HepG2 (cell line): ENCODE measurements at regions of chr17 and their contacts with region 1.

Region 1: DNA sequence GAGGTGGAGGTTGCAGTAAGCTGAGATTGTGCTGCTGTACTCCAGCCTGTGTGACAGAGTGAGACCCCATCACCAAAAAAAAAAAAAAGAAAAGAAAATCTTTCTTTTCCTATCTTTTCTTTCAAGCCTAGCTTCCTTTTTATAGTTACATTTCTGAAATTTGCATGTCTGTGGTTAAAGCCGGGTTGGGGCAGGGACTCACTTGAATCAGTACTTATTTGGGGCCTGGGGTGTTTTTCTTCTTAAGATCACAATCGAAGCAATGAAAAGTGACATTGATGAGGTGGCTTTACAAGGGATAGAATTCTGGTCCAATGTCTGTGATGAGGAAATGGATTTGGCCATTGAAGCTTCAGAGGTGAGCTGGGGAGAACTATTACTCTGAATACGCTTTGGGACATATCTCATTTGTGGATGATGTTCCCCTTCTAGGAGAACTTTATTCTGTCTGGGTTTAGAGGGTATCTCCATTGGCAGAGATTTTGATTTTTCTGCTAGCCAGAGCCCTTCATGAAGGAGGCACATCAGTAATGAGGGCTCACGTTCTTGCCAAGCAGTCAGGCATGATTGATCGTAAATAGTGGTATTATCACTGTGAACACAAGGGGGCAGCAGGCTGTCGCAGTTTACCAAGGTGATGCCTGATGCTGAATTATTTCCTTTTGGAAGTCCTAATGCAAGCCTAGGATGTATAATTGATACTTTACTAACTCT is 14.3 kb downstream of the KPNB1 start:
- DNase-seq: peak; percentile 63
- ATAC-seq: peak; percentile 86
- H3K4me3 ChIP-seq: no peak overlapping the region
- H3K27ac ChIP-seq: no peak overlapping the region
- H3K4me1 ChIP-seq: no peaks in the 10 kb centered on the region
- H3K27me3 ChIP-seq: no peaks in the 10 kb centered on the region
- CTCF ChIP-seq: peak; percentile 87
- EP300 ChIP-seq: no peak
- POLR2A ChIP-seq: no peak
- RAD21 ChIP-seq: no peak

Region 2: GRCh38 chr17:47713980-47714700 is 50.1 kb after region 1 on chr17:
- CTCF ChIA-PET with region 1: no interaction called
- POLR2A ChIA-PET with region 1: no interaction called
- in situ Hi-C with region 1: no loop called
- intact Hi-C with region 1: loop called (anchors 2 kb)
- DNase-seq: no peak
- ATAC-seq: peak; percentile 60
- H3K4me3 ChIP-seq: no peak overlapping the region
- H3K27ac ChIP-seq: no peak overlapping the region
- H3K4me1 ChIP-seq: peaks cover 16% of the 10 kb centered on the region
- H3K27me3 ChIP-seq: peaks cover 7 to 55% of the 10 kb centered on the region in 2 experiments; a peak in 4 of 5 replicates
- CTCF ChIP-seq: peak; percentile 53
- EP300 ChIP-seq: no peak
- POLR2A ChIP-seq: no peak
- RAD21 ChIP-seq: no peak

Region 3: DNA sequence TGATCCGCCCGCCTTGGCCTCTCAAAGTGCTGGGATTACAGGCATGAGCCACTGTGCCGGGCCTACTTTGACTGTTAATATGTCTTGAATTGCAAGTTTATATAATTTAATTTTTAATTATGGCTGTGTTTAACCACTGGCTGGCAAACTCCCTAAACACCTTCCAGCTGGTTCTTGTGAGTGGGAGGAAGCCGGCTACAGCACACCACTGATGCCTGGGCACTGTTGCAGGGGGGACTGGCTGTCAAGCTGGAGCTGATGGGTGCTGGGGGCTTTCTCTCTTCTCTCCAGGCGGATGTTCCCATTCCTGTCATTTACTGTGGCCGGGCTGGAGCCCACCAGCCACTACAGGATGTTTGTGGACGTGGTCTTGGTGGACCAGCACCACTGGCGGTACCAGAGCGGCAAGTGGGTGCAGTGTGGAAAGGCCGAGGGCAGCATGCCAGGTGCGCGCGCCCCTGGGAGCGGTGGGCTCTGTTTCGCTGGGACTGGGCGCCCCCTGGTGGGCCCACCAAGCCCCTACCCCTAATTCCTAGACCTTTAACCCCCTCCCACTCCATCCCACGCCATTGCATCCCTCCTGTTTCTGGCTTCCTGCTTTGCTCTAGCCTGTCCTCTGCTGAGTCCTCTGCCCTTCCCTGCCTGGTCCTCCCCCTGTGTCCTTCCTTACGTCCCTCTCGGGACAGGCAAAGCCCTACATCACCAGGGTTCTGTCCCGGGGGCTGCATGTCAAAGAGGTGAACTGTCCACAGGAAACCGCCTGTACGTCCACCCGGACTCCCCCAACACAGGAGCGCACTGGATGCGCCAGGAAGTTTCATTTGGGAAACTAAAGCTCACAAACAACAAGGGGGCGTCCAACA is 78.5 kb after region 1 on chr17:
- CTCF ChIA-PET with region 1: interaction called, 8 read pairs
- POLR2A ChIA-PET with region 1: no interaction called
- in situ Hi-C with region 1: no loop called
- intact Hi-C with region 1: loop called (anchors 1 kb)
- DNase-seq: peak; percentile 35
- ATAC-seq: peak; percentile 85
- H3K4me3 ChIP-seq: no peak overlapping the region; a peak in 1 of 6 replicates
- H3K27ac ChIP-seq: no peak overlapping the region
- H3K4me1 ChIP-seq: peaks cover 12% of the 10 kb centered on the region; the same call in 1 of the 2 replicates
- H3K27me3 ChIP-seq: peaks cover 2 to 74% of the 10 kb centered on the region in 2 experiments; a peak in 4 of 5 replicates
- CTCF ChIP-seq: peak; percentile 90
- EP300 ChIP-seq: no peak
- POLR2A ChIP-seq: no peak
- RAD21 ChIP-seq: peak; percentile 83